ENCODE measurements at regions of chr2 and their contacts with region 1.

Region 1: GRCh38 chr2:127857265-127857808 is 618 bp downstream of the POLR2D start:
- DNase-seq: no peak
- ATAC-seq: peak in 2 of 8 donors; percentile 5 to 7
- H3K4me3 ChIP-seq: peak overlapping the region; percentile 65 to 96 (median 94)
- H3K27ac ChIP-seq: peak overlapping the region in 9 of 10 donors; percentile 70 to 91 (median 78)
- H3K4me1 ChIP-seq: peaks cover 2 to 75% (median 39%) of the 10 kb centered on the region in 9 donors
- H3K27me3 ChIP-seq: no peaks in the 10 kb centered on the region
- CTCF ChIP-seq: no peak

Region 2: GRCh38 chr2:127810619-127811396 is 46.5 kb before region 1 on chr2 and contains the start of gene WDR33:
- intact Hi-C with region 1: loop called in 1 of 10 experiments (anchors 1 kb)
- DNase-seq: peak; percentile 89 to 90
- ATAC-seq: peak; percentile 99 to 100 (median 99)
- H3K4me3 ChIP-seq: peak within 1 kb of the TSS; percentile 61 to 96 (median 80)
- H3K27ac ChIP-seq: peak within 1 kb of the TSS; percentile 69 to 96 (median 88)
- H3K4me1 ChIP-seq: peaks cover 4 to 45% (median 41%) of the 10 kb centered on the region in 9 donors
- H3K27me3 ChIP-seq: no peaks in the 10 kb centered on the region
- CTCF ChIP-seq: peak in 5 of 9 donors; percentile 7 to 41 (median 13)
- total RNA-seq, gene WDR33: 38.5 to 47.6 (median 42.9) TPM

Region 3: GRCh38 chr2:127884436-127885345 is 27.4 kb after region 1 on chr2:
- intact Hi-C with region 1: no loop called
- DNase-seq: no peak
- ATAC-seq: no peak
- H3K4me3 ChIP-seq: peak overlapping the region; percentile 29 to 87 (median 74)
- H3K27ac ChIP-seq: peak overlapping the region; percentile 43 to 94 (median 92)
- H3K4me1 ChIP-seq: peaks cover 5 to 63% (median 47%) of the 10 kb centered on the region in 9 donors
- H3K27me3 ChIP-seq: no peaks in the 10 kb centered on the region
- CTCF ChIP-seq: no peak

Measured in heart right ventricle (tissue), 16 donors.